ENCODE measurements at regions of chr20 and their contacts with region 1.

Region 1: GRCh38 chr20:8756410-8756809 is 312.5 kb upstream of the PLCB4 start:
- DNase-seq: peak in 2 of 3 donors; percentile 31 to 55
- H3K4me3 ChIP-seq: no peak overlapping the region
- H3K27ac ChIP-seq: no peak overlapping the region
- H3K4me1 ChIP-seq: peaks cover 0 to 15% (median 5%) of the 10 kb centered on the region in 4 experiments
- H3K27me3 ChIP-seq: no peaks in the 10 kb centered on the region

Region 2: GRCh38 chr20:8693709-8694108 is 62.7 kb before region 1 on chr20:
- CTCF ChIA-PET with region 1: no interaction called
- POLR2A ChIA-PET with region 1: no interaction called
- DNase-seq: no peak
- H3K4me3 ChIP-seq: no peak overlapping the region
- H3K27ac ChIP-seq: no peak overlapping the region
- H3K4me1 ChIP-seq: no peaks in the 10 kb centered on the region
- H3K27me3 ChIP-seq: no peaks in the 10 kb centered on the region

Region 3: DNA sequence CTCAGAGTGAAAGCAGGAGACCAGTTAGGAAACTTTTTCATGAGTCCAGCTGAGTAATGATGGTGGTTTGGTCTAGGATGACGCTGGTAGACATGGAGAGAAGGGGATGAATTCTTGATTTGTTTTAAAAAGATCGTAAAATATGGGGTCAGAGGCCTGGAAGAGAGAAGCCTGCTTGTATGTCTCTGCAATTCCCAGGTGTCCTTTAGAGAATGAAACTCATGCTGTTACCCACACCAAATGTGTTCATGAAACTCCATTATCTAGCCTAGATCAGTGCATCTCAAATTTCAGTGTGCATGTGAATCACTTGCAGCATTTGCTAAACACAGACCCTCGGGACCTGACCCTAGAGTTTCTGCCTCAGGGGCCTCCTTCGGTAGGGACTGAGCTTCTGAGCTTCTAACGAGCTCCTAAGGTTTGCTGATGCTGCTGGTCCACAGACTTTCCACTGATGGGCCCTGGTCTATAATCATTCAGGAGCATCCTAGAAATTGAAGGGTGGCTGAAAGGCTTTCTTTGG is 10.5 kb after region 1 on chr20:
- CTCF ChIA-PET with region 1: interaction called, 11 read pairs
- POLR2A ChIA-PET with region 1: no interaction called
- DNase-seq: no peak
- H3K4me3 ChIP-seq: no peak overlapping the region
- H3K27ac ChIP-seq: no peak overlapping the region
- H3K4me1 ChIP-seq: peaks cover 0 to 9% (median 0%) of the 10 kb centered on the region in 4 experiments
- H3K27me3 ChIP-seq: no peaks in the 10 kb centered on the region

Measured in common myeloid progenitor, CD34-positive (primary cell).